ENCODE measurements at regions of chr2 and their contacts with region 1.

Region 1: DNA sequence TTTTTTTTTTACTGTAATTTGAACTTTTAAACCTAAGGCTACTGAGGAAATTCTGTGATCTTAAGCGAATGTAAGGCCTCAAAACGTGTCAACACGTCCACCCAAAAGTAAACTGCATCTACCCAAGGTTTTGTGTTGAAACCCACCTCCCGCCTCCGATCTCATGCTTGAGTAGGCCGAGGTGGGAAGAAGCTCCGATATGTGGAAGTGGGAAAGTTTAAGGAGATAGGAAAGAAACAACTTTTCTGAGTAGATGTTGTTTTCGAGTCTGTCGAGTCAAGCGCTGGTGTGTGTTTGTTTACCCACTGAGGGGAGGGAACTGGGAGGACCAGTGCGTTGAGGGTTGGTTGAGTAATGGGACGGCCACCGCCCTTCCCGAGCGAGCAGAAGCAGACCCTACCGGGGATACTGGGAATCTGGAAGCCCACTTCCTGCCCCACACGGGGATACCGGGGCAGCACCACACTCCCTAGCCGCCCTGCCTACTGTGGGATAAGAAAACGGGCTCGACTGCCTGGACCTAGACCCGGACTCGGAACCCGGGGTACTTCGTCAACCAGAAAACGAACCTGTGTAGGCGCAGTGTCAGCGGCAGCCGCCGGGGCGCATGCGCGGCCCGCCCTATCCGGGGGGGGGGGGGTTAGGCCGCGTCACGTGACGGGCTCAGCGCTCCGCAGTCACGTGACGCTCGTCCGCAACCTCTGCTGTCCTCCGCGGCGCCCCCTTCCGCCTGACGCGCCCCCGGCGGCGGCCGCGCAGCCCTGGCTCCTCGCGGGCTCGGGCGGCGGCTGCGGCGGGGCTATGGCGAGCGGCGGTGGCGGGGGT is at the start of gene RETREG2:
- DNase-seq: peak; percentile 72
- ATAC-seq: peak; percentile 62
- H3K4me3 ChIP-seq: peak within 1 kb of the TSS; percentile 83
- H3K27ac ChIP-seq: peak within 1 kb of the TSS; percentile 98
- H3K4me1 ChIP-seq: peaks cover 10% of the 10 kb centered on the region
- H3K27me3 ChIP-seq: no peaks in the 10 kb centered on the region
- CTCF ChIP-seq: peak; percentile 26 to 53 (median 35); a peak in 4 of 6 replicates
- EP300 ChIP-seq: peak in 1 of 2 experiments; percentile 50; a peak in 2 of 4 replicates
- POLR2A ChIP-seq: peak; percentile 91
- RAD21 ChIP-seq: no peak
- polyA plus RNA-seq, gene RETREG2: 10.1 to 25.2 TPM

Region 2: DNA sequence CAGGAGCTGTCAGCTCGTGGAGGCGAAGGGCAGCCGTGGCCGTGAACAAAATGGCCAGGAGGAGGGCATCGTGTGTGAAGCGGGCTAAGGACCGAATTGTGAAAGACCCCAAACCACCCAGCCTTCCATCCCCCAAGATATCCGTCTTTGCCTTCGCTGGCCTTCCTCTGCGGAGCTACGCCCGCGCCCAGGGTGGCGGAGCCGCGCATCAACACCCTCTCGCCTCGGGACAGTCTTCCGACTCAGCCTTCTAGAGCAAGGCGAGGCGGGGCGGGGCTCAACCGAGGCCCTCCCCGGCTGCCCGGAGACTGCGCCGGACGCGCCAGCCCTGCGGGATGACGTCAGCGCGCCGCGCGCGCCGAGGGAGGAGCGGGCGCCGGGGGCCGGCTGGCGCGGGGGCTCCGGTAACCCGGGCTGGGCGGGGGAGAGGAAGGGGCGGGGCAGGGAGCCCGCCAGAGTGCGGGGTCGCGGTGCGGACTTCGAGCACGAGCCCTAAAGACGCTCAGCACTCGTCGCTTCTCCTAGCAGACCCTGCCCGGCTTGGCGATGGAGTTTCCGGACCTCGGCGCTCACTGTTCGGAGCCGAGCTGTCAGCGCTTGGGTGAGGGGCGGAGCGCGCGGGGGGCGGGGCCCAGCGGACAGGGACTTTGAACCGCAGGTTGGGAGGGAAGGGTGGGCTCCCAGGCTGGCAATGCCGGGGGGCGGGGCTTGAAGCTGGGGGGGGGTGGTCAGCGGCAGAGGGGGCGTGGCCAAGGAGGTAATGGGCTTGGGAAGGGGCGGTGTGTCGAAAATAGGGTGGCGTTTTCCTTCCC is 28.9 kb after region 1 on chr2 and contains the start of gene ZFAND2B:
- CTCF ChIA-PET with region 1: interaction called, 19 read pairs
- POLR2A ChIA-PET with region 1: interaction called, 47 read pairs
- RAD21 ChIA-PET with region 1: interaction called, 21 read pairs
- SMC1A ChIA-PET with region 1: interaction called, 14 read pairs
- in situ Hi-C with region 1: loop called (anchors 5 kb)
- intact Hi-C with region 1: loop called (anchors 2 kb)
- DNase-seq: peak; percentile 52
- ATAC-seq: peak; percentile 99
- H3K4me3 ChIP-seq: peak within 1 kb of the TSS; percentile 50
- H3K27ac ChIP-seq: peak within 1 kb of the TSS; percentile 72
- H3K4me1 ChIP-seq: peaks cover 8% of the 10 kb centered on the region
- H3K27me3 ChIP-seq: no peaks in the 10 kb centered on the region
- CTCF ChIP-seq: peak in 2 of 3 experiments; percentile 9 to 14; a peak in 1 of 6 replicates
- EP300 ChIP-seq: no peak
- POLR2A ChIP-seq: peak; percentile 99
- RAD21 ChIP-seq: no peak
- polyA plus RNA-seq, gene ZFAND2B: 5.4 to 10.7 TPM

Region 3: GRCh38 chr2:219218732-219219701 is 41.3 kb after region 1 on chr2 and contains the start of gene ABCB6:
- CTCF ChIA-PET with region 1: interaction called, 14 read pairs
- POLR2A ChIA-PET with region 1: interaction called, 21 read pairs
- RAD21 ChIA-PET with region 1: interaction called, 4 read pairs
- SMC1A ChIA-PET with region 1: interaction called, 4 read pairs
- in situ Hi-C with region 1: no loop called
- intact Hi-C with region 1: no loop called
- DNase-seq: peak; percentile 63
- ATAC-seq: peak; percentile 92
- H3K4me3 ChIP-seq: peak within 1 kb of the TSS; percentile 92
- H3K27ac ChIP-seq: peak within 1 kb of the TSS; percentile 63
- H3K4me1 ChIP-seq: peaks cover 16% of the 10 kb centered on the region
- H3K27me3 ChIP-seq: no peaks in the 10 kb centered on the region
- CTCF ChIP-seq: no peak
- EP300 ChIP-seq: no peak
- POLR2A ChIP-seq: peak; percentile 95
- RAD21 ChIP-seq: no peak
- polyA plus RNA-seq, gene ABCB6: 2.3 to 10.1 TPM

Region 4: GRCh38 chr2:219245148-219245898 is 67.6 kb after region 1 on chr2 and contains the starts of genes GLB1L and STK16:
- CTCF ChIA-PET with region 1: interaction called, 6 read pairs
- POLR2A ChIA-PET with region 1: interaction called, 25 read pairs
- RAD21 ChIA-PET with region 1: interaction called, 22 read pairs
- SMC1A ChIA-PET with region 1: interaction called, 13 read pairs
- in situ Hi-C with region 1: no loop called
- intact Hi-C with region 1: no loop called
- DNase-seq: peak; percentile 75
- ATAC-seq: peak; percentile 83
- H3K4me3 ChIP-seq: peak within 1 kb of the TSS; percentile 90
- H3K27ac ChIP-seq: peak within 1 kb of the TSS; percentile 70
- H3K4me1 ChIP-seq: peaks cover 44% of the 10 kb centered on the region
- H3K27me3 ChIP-seq: no peaks in the 10 kb centered on the region
- CTCF ChIP-seq: no peak
- EP300 ChIP-seq: no peak
- POLR2A ChIP-seq: peak; percentile 96
- RAD21 ChIP-seq: no peak
- polyA plus RNA-seq, gene GLB1L: 0.29 to 1.0 TPM
- polyA plus RNA-seq, gene STK16: 8.4 to 9.0 TPM

Region 5: GRCh38 chr2:219253753-219254590 is 76.2 kb after region 1 on chr2 and contains the start of gene TUBA4A:
- CTCF ChIA-PET with region 1: interaction called, 9 read pairs
- POLR2A ChIA-PET with region 1: interaction called, 25 read pairs
- RAD21 ChIA-PET with region 1: interaction called, 22 read pairs
- SMC1A ChIA-PET with region 1: interaction called, 13 read pairs
- in situ Hi-C with region 1: no loop called
- intact Hi-C with region 1: loop called (anchors 2 kb)
- DNase-seq: no peak
- ATAC-seq: peak; percentile 83
- H3K4me3 ChIP-seq: peak within 1 kb of the TSS; percentile 86
- H3K27ac ChIP-seq: peak within 1 kb of the TSS; percentile 77
- H3K4me1 ChIP-seq: peaks cover 22% of the 10 kb centered on the region
- H3K27me3 ChIP-seq: no peaks in the 10 kb centered on the region
- CTCF ChIP-seq: no peak
- EP300 ChIP-seq: 0 out of 4 replicates have a peak, but pooled peaks of 1 of the 2 experiments have one; percentile 23
- POLR2A ChIP-seq: peak; percentile 97
- RAD21 ChIP-seq: no peak
- polyA plus RNA-seq, gene TUBA4A: 58.2 to 88.6 TPM

Region 6: GRCh38 chr2:219388127-219388844 is 210.5 kb after region 1 on chr2:
- CTCF ChIA-PET with region 1: no interaction called
- POLR2A ChIA-PET with region 1: interaction called, 8 read pairs
- RAD21 ChIA-PET with region 1: no interaction called
- SMC1A ChIA-PET with region 1: no interaction called
- in situ Hi-C with region 1: no loop called
- intact Hi-C with region 1: loop called (anchors 5 kb)
- DNase-seq: peak; percentile 83
- ATAC-seq: peak; percentile 86
- H3K4me3 ChIP-seq: peak overlapping the region; percentile 8; the same call in 1 of the 2 replicates
- H3K27ac ChIP-seq: no peak overlapping the region
- H3K4me1 ChIP-seq: peaks cover 5% of the 10 kb centered on the region
- H3K27me3 ChIP-seq: no peaks in the 10 kb centered on the region
- CTCF ChIP-seq: peak; percentile 48 to 67 (median 63); a peak in 5 of 6 replicates
- EP300 ChIP-seq: no peak
- POLR2A ChIP-seq: no peak
- RAD21 ChIP-seq: no peak